ENCODE measurements at regions of chr2 and their contacts with region 1.

Region 1: GRCh38 chr2:26011990-26012856 is 21.7 kb upstream of the RAB10 start:
- DNase-seq: peak; percentile 91 to 96
- H3K4me3 ChIP-seq: peak overlapping the region; percentile 4
- H3K4me3 Mint-ChIP-seq: peak overlapping the region; percentile 55
- H3K27ac Mint-ChIP-seq: peak overlapping the region; percentile 91
- H3K4me1 ChIP-seq: peaks cover 40% of the 10 kb centered on the region
- H3K4me1 Mint-ChIP-seq: peaks cover 45% of the 10 kb centered on the region
- H3K27me3 ChIP-seq: no peaks in the 10 kb centered on the region
- H3K27me3 Mint-ChIP-seq: no peaks in the 10 kb centered on the region
- CTCF ChIP-seq: no peak

Region 2: GRCh38 chr2:26001743-26002351 is 10.4 kb before region 1 on chr2:
- CTCF ChIA-PET with region 1: interaction called, 27 read pairs
- POLR2A ChIA-PET with region 1: interaction called, 11 read pairs
- intact Hi-C with region 1: loop called (anchors 1 kb)
- DNase-seq: no peak
- H3K4me3 ChIP-seq: no peak overlapping the region
- H3K4me3 Mint-ChIP-seq: no peak overlapping the region
- H3K27ac Mint-ChIP-seq: peak overlapping the region; percentile 95
- H3K4me1 ChIP-seq: peaks cover 37% of the 10 kb centered on the region
- H3K4me1 Mint-ChIP-seq: peaks cover 55% of the 10 kb centered on the region
- H3K27me3 ChIP-seq: no peaks in the 10 kb centered on the region
- H3K27me3 Mint-ChIP-seq: no peaks in the 10 kb centered on the region
- CTCF ChIP-seq: no peak

Region 3: GRCh38 chr2:26033818-26034636 is 21.8 kb after region 1 on chr2 and contains the start of gene RAB10:
- CTCF ChIA-PET with region 1: interaction called, 11 read pairs
- POLR2A ChIA-PET with region 1: interaction called, 44 read pairs
- intact Hi-C with region 1: loop called (anchors 1 kb)
- DNase-seq: peak; percentile 100
- H3K4me3 ChIP-seq: peak within 1 kb of the TSS; percentile 76
- H3K4me3 Mint-ChIP-seq: peak within 1 kb of the TSS; percentile 76
- H3K27ac Mint-ChIP-seq: peak within 1 kb of the TSS; percentile 60
- H3K4me1 ChIP-seq: 0 out of 2 replicates have a peak, but pooled peaks cover 15% of the 10 kb centered on the region
- H3K4me1 Mint-ChIP-seq: peaks cover 18% of the 10 kb centered on the region
- H3K27me3 ChIP-seq: no peaks in the 10 kb centered on the region
- H3K27me3 Mint-ChIP-seq: no peaks in the 10 kb centered on the region
- CTCF ChIP-seq: no peak
- total RNA-seq, gene RAB10: 203 and 213 TPM in 2 replicates